ENCODE measurements at regions of chr7 and their contacts with region 1.

Region 1: GRCh38 chr7:43700059-43700501 is 29.2 kb downstream of the COA1 start:
- DNase-seq: peak; percentile 64
- H3K4me3 Mint-ChIP-seq: no peak overlapping the region
- H3K27ac Mint-ChIP-seq: no peak overlapping the region
- H3K4me1 Mint-ChIP-seq: peaks cover 5% of the 10 kb centered on the region
- H3K27me3 Mint-ChIP-seq: no peaks in the 10 kb centered on the region
- CTCF ChIP-seq: peak; percentile 69

Region 2: GRCh38 chr7:43454936-43455518 is 245.1 kb before region 1 on chr7:
- CTCF ChIA-PET with region 1: interaction called, 4 read pairs
- POLR2A ChIA-PET with region 1: no interaction called
- intact Hi-C with region 1: loop called (anchors 5 kb)
- DNase-seq: peak; percentile 71
- H3K4me3 Mint-ChIP-seq: no peak overlapping the region
- H3K27ac Mint-ChIP-seq: no peak overlapping the region
- H3K4me1 Mint-ChIP-seq: peaks cover 6% of the 10 kb centered on the region
- H3K27me3 Mint-ChIP-seq: no peaks in the 10 kb centered on the region
- CTCF ChIP-seq: peak; percentile 48

Region 3: GRCh38 chr7:43639858-43640491 is 60.1 kb before region 1 on chr7:
- CTCF ChIA-PET with region 1: interaction called, 24 read pairs
- POLR2A ChIA-PET with region 1: interaction called, 12 read pairs
- intact Hi-C with region 1: loop called (anchors 2 kb)
- DNase-seq: peak; percentile 72
- H3K4me3 Mint-ChIP-seq: no peak overlapping the region
- H3K27ac Mint-ChIP-seq: peak overlapping the region; percentile 84
- H3K4me1 Mint-ChIP-seq: peaks cover 38% of the 10 kb centered on the region
- H3K27me3 Mint-ChIP-seq: no peaks in the 10 kb centered on the region
- CTCF ChIP-seq: no peak

Region 4: DNA sequence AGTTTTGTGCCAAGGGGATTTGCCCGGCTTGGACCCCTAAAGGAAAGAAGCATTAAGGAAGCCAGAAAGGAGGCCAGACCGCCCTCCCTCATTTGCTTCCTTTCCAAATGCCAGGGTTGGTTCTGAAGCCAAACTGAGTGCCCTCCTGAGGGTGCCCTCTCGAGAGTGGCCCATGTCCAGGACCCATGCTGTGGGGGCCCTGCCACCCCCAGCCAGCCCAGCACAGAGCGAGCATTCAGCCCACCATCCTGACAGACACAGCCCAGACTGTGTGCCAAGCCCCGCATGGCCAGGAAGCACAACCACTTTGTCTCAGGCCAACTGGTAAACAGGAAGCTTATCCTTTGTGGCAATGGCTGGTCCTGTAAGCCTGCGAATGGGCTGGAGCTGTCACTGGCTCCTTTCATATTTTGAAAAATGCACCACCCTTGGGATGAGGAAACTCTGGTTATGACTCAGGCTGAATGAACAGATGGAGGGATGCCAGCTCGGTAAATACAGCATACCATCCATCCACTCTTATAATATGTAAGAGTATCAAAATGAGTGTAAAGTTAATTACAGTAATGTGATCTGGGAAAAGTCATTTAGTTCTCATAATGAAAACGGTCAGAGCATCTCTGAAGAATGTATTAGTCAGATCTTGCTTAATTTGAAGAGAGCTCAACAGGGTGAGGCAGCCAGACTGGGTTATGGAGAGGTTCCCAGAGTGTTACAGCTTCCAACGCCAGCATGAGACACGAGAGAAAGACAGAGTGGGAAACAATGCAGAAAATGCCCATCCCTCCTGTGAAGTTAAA is 52.2 kb before region 1 on chr7:
- CTCF ChIA-PET with region 1: interaction called, 31 read pairs
- POLR2A ChIA-PET with region 1: interaction called, 10 read pairs
- intact Hi-C with region 1: loop called (anchors 1 kb)
- DNase-seq: peak; percentile 98
- H3K4me3 Mint-ChIP-seq: peak overlapping the region; percentile 38
- H3K27ac Mint-ChIP-seq: peak overlapping the region; percentile 89
- H3K4me1 Mint-ChIP-seq: peaks cover 54% of the 10 kb centered on the region
- H3K27me3 Mint-ChIP-seq: no peaks in the 10 kb centered on the region
- CTCF ChIP-seq: no peak

Region 5: DNA sequence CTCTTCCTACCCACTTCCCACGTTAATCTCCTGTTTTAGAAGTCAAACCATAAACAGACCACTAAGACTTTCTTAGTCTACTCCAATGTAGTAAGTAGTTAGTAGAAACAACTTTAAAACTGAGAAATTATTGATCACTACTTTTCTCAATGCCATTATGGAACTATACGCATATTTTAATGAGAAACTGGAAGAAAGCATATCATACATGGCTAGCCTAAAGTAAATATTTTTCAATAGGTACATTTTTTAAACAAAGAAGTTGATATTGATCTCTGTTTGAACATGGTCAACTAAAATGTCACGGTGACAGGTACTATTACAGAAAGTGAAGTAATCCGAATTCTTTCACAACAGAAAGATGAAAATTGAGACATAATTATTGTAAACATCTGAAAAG is 17.9 kb before region 1 on chr7:
- CTCF ChIA-PET with region 1: interaction called, 36 read pairs
- POLR2A ChIA-PET with region 1: interaction called, 4 read pairs
- intact Hi-C with region 1: no loop called
- DNase-seq: no peak
- H3K4me3 Mint-ChIP-seq: no peak overlapping the region
- H3K27ac Mint-ChIP-seq: no peak overlapping the region
- H3K4me1 Mint-ChIP-seq: no peaks in the 10 kb centered on the region
- H3K27me3 Mint-ChIP-seq: no peaks in the 10 kb centered on the region
- CTCF ChIP-seq: no peak

Region 6: GRCh38 chr7:43721193-43721806 is 21.2 kb after region 1 on chr7:
- CTCF ChIA-PET with region 1: interaction called, 10 read pairs
- POLR2A ChIA-PET with region 1: interaction called, 5 read pairs
- intact Hi-C with region 1: no loop called
- DNase-seq: peak; percentile 70
- H3K4me3 Mint-ChIP-seq: no peak overlapping the region
- H3K27ac Mint-ChIP-seq: no peak overlapping the region
- H3K4me1 Mint-ChIP-seq: peaks cover 15% of the 10 kb centered on the region
- H3K27me3 Mint-ChIP-seq: no peaks in the 10 kb centered on the region
- CTCF ChIP-seq: peak; percentile 49

Region 7: DNA sequence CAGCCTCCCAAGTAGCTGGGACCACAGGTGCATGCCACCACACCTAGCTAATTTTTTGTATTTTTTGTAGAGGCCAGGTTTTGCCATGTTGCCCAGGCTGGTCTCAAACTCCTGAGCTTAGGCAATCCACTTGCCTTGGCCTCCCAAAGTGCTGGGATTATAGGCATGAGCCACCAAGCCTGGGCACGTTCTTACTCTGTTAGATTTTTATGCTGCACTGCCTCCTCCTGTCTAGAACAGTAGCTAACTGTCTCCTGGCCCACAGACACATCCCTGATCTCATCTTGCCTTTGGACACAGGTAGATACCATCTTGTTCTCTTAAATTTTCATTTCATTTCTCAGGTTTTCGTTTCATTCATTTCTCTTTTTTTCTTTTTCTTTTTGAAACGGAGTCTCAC is 99.5 kb after region 1 on chr7:
- CTCF ChIA-PET with region 1: interaction called, 17 read pairs
- POLR2A ChIA-PET with region 1: no interaction called
- intact Hi-C with region 1: no loop called
- DNase-seq: peak; percentile 54
- H3K4me3 Mint-ChIP-seq: no peak overlapping the region
- H3K27ac Mint-ChIP-seq: peak overlapping the region; percentile 76
- H3K4me1 Mint-ChIP-seq: no peaks in the 10 kb centered on the region
- H3K27me3 Mint-ChIP-seq: no peaks in the 10 kb centered on the region
- CTCF ChIP-seq: no peak

Region 8: GRCh38 chr7:44415047-44415446 is 715.0 kb after region 1 on chr7:
- CTCF ChIA-PET with region 1: no interaction called
- POLR2A ChIA-PET with region 1: no interaction called
- intact Hi-C with region 1: no loop called
- DNase-seq: peak; percentile 9
- H3K4me3 Mint-ChIP-seq: no peak overlapping the region
- H3K27ac Mint-ChIP-seq: peak overlapping the region; percentile 44
- H3K4me1 Mint-ChIP-seq: peaks cover 20% of the 10 kb centered on the region
- H3K27me3 Mint-ChIP-seq: no peaks in the 10 kb centered on the region
- CTCF ChIP-seq: no peak